Prostate gland (tissue), 2 donors: ENCODE measurements at regions of chr12 and their contacts with region 1.

Region 1: DNA sequence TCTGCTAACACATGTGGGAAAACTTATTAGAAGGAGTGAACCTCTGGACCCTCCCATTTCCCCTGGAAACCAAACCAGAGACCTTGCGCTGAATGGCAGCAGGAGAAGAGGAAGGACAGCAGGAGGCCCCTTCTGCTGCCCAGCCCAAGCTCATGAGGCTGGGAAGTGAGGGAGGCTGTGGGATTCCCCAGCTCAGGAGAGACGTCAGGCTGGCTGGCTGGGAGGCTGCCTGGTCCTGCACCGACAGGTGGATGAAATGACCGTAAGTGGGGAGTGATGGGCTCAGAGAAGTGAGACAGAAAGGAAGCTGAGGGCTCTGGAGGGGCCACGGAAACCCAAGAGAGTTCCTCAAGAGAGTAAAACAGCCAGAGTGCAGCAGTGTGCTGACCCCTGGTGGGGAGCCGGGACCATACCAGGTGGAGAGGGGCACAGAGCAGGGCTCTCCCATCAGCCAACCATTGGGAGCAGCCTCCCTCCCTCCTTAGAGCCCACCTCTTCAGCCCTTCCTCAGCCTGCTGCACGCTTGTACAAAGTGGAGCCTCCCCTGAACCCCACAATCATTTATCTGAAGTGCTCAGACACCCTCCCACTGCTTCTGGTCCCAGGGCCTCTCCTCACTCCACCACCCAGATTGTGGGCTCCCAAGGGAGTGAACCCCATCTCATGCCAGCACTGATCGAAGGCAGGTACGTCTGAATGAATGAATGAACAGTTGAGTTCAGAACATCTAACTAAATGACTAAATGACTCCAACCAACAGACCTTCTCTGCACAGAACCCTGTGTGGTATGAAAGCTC is 14.0 kb downstream of the TAMALIN start:
- DNase-seq: no peak
- H3K4me3 ChIP-seq: no peak overlapping the region
- H3K27ac ChIP-seq: no peak overlapping the region
- H3K4me1 ChIP-seq: no peaks in the 10 kb centered on the region
- H3K27me3 ChIP-seq: no peaks in the 10 kb centered on the region
- CTCF ChIP-seq: peak in 3 of 4 experiments; percentile 50 to 62 (median 61)
- POLR2A ChIP-seq: no peak

Region 2: GRCh38 chr12:51744235-51744634 is 276.5 kb before region 1 on chr12:
- intact Hi-C with region 1: no loop called
- DNase-seq: no peak
- H3K4me3 ChIP-seq: no peak overlapping the region
- H3K27ac ChIP-seq: no peak overlapping the region
- H3K4me1 ChIP-seq: no peaks in the 10 kb centered on the region
- H3K27me3 ChIP-seq: no peaks in the 10 kb centered on the region
- CTCF ChIP-seq: no peak
- POLR2A ChIP-seq: no peak

Region 3: GRCh38 chr12:52004042-52004648 is 16.6 kb before region 1 on chr12:
- intact Hi-C with region 1: loop called (anchors 2 kb)
- DNase-seq: peak; percentile 61
- H3K4me3 ChIP-seq: no peak overlapping the region
- H3K27ac ChIP-seq: no peak overlapping the region
- H3K4me1 ChIP-seq: peaks cover under 1% of the 10 kb centered on the region
- H3K27me3 ChIP-seq: no peaks in the 10 kb centered on the region
- CTCF ChIP-seq: peak; percentile 43 to 93 (median 76)
- POLR2A ChIP-seq: no peak

Region 4: GRCh38 chr12:52082988-52083637 is 62.4 kb after region 1 on chr12:
- intact Hi-C with region 1: loop called (anchors 1 kb)
- DNase-seq: no peak
- H3K4me3 ChIP-seq: no peak overlapping the region
- H3K27ac ChIP-seq: peak overlapping the region; percentile 72 to 88
- H3K4me1 ChIP-seq: peaks cover 14% of the 10 kb centered on the region
- H3K27me3 ChIP-seq: no peaks in the 10 kb centered on the region
- CTCF ChIP-seq: peak; percentile 85 to 97 (median 96)
- POLR2A ChIP-seq: no peak

Region 5: DNA sequence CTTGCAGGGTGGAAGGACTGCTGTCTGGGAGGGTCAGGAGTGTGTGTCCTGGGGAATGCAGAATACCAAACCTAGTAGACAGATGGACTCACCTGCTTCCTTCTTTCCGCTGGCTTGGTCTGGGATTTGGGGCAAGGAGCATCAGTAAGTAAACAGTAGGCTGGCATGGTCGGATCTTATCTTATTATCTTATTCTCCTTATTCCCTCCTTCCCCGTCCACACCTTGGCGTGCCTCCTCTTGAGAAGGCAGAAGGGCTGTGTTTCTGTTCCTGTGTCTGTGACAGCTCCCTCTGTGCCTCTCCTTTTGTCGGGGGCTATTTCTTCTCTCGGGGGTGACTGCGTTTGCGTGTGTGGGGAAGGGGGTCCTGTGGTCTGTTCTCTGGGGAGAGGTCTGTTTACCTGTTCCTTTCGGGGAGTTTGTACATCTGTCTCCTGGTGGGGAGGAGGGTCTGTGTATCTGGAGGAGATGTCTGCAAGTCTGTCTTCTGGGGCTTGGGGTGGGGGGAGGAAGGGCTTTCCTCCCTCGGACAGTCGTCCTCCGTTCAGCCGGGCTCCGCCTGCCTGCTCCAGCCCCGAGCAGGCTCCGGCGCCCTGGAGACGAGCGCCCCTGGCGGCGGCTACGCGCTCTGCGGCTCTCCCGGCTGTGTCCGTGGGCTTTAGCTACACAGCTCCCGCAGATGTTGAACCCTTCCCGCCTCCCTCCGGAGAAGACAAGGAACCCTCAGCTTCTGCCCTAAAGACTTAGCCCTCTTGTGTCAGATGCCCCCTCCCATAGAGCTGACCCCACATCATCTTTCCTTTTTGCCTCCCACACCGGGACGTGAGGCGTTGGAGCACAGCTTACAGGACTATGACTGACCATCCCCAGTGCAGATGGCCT is 258.0 kb after region 1 on chr12:
- intact Hi-C with region 1: no loop called
- DNase-seq: peak; percentile 79
- H3K4me3 ChIP-seq: peak overlapping the region in 1 of 2 donors; percentile 21
- H3K27ac ChIP-seq: peak overlapping the region; percentile 78 to 82
- H3K4me1 ChIP-seq: peaks cover 5% of the 10 kb centered on the region
- H3K27me3 ChIP-seq: no peaks in the 10 kb centered on the region
- CTCF ChIP-seq: peak; percentile 90 to 98 (median 93)
- POLR2A ChIP-seq: peak; percentile 30